CD8-positive, alpha-beta memory T cell (primary cell): ENCODE measurements at regions of chr3 and their contacts with region 1.

Region 1: DNA sequence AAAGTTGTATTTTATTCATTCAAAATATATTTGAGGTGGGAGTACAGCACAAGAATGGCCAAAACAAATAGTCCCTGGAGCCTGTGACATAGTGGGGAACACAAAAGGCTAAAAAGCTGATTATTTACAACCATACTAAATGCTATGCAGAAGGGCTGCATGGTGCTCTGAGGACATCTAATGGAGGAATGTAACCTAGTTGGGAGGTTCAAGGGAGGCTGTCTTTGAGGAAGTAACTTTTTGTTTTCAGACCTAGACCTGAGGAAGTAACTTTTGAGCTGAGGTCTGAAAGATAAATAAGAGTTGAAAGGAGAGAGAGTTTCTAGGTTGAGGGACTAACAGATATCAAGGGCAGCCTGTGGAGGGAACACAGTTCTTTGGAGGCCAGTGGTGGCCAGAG is 34.8 kb upstream of the RASA2 start:
- DNase-seq: peak in 3 of 5 donors; percentile 34 to 57 (median 56)
- H3K4me3 ChIP-seq: no peak overlapping the region
- H3K4me3 Mint-ChIP-seq: no peak overlapping the region
- H3K27ac ChIP-seq: peak overlapping the region; percentile 13
- H3K27ac Mint-ChIP-seq: no peak overlapping the region
- H3K4me1 ChIP-seq: peaks cover 21% of the 10 kb centered on the region
- H3K4me1 Mint-ChIP-seq: peaks cover 10 to 16% (median 10%) of the 10 kb centered on the region in 3 donors
- H3K27me3 ChIP-seq: no peaks in the 10 kb centered on the region
- H3K27me3 Mint-ChIP-seq: no peaks in the 10 kb centered on the region

Region 2: GRCh38 chr3:141127344-141128125 is 324.5 kb before region 1 on chr3:
- CTCF ChIA-PET with region 1: no interaction called
- POLR2A ChIA-PET with region 1: no interaction called
- DNase-seq: no peak
- H3K4me3 ChIP-seq: no peak overlapping the region
- H3K4me3 Mint-ChIP-seq: no peak overlapping the region
- H3K27ac ChIP-seq: no peak overlapping the region
- H3K27ac Mint-ChIP-seq: no peak overlapping the region
- H3K4me1 ChIP-seq: no peaks in the 10 kb centered on the region
- H3K4me1 Mint-ChIP-seq: no peaks in the 10 kb centered on the region
- H3K27me3 ChIP-seq: no peaks in the 10 kb centered on the region
- H3K27me3 Mint-ChIP-seq: peaks cover 20 to 39% of the 10 kb centered on the region in 2 donors

Region 3: DNA sequence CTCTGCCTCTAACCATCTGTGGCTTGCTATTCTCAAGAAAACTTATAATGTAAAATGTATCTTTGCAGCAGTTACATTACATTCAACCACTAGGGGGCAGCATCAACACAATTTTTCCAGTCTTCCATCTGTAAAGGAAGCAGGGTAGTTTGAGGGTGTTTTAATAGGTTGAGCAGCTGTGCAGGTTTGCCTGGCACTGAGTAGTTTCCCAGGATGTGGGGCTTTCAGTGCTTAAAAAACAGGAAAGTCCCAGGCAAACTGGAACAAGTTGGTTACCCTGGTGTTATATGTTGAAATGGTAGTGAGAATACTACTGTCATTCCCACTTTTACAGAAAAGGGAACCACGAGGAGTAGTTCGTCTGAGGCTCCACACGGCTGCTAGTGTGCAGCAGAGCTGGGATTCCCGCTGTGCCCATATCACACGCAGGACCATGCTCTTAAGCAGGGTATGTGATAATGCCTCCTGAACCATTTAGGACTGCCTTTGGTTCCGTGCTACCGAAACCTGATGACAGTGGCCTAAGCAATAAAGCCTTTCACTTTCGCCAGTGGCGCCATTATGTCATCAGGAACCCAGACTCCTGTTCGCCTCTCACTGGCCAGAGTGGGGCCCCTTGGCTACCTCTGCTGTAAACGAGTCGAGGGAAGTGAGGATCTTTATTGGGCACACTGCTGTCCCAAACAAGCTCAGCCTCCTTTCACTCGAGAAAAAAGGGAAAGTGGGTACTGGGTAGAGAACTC is 148.4 kb before region 1 on chr3:
- CTCF ChIA-PET with region 1: interaction called, 84 read pairs
- POLR2A ChIA-PET with region 1: no interaction called
- DNase-seq: peak; percentile 38 to 70 (median 66)
- H3K4me3 ChIP-seq: no peak overlapping the region
- H3K4me3 Mint-ChIP-seq: peak overlapping the region in 1 of 7 donors; percentile 10
- H3K27ac ChIP-seq: no peak overlapping the region
- H3K27ac Mint-ChIP-seq: no peak overlapping the region
- H3K4me1 ChIP-seq: peaks cover 41% of the 10 kb centered on the region
- H3K4me1 Mint-ChIP-seq: peaks cover 24 to 36% (median 34%) of the 10 kb centered on the region in 3 donors
- H3K27me3 ChIP-seq: no peaks in the 10 kb centered on the region
- H3K27me3 Mint-ChIP-seq: no peaks in the 10 kb centered on the region

Region 4: GRCh38 chr3:141311496-141312353 is 140.3 kb before region 1 on chr3:
- CTCF ChIA-PET with region 1: interaction called, 84 read pairs
- POLR2A ChIA-PET with region 1: interaction called, 11 read pairs
- DNase-seq: peak; percentile 96 to 99 (median 98)
- H3K4me3 ChIP-seq: peak overlapping the region; percentile 58
- H3K4me3 Mint-ChIP-seq: peak overlapping the region; percentile 90 to 98 (median 95)
- H3K27ac ChIP-seq: peak overlapping the region; percentile 66
- H3K27ac Mint-ChIP-seq: peak overlapping the region; percentile 82 to 99 (median 97)
- H3K4me1 ChIP-seq: peaks cover 44% of the 10 kb centered on the region
- H3K4me1 Mint-ChIP-seq: peaks cover 44 to 53% (median 48%) of the 10 kb centered on the region in 3 donors
- H3K27me3 ChIP-seq: no peaks in the 10 kb centered on the region
- H3K27me3 Mint-ChIP-seq: peaks cover 0 to 1% of the 10 kb centered on the region in 2 donors

Region 5: DNA sequence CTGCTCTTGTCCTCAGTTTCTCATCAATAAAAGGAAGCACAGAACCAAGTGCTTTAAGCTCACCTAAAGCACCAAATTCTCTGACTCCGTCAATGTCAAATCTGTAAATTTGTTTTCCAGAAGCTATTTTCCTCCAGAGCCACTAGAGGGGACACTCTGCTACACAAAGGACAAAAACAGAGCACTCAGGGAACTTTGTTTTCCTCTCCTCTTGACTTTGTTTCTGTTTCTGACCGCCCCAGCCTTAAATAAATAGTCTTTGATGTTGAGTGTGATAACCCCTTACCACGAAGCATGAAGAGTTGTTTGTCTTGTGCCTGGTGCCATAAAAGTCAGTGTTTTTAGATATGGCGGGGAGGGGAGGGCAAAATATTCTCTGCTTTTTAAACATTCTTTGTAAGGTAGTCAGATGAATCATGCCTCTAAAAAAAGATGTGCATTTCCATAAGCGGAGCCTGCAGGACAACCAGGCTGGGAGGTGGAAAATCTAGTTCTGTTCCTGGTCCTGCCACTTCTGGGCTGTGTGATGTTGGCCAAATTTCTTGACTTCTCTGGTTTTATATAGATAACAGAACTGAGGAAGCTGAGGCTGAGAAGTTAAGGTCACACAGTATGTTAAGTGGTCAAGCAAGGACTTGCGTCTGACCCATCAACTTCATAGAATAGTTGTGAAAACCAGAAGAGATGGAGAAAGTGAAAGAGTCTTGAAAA is 91.0 kb before region 1 on chr3:
- CTCF ChIA-PET with region 1: interaction called, 69 read pairs
- POLR2A ChIA-PET with region 1: no interaction called
- DNase-seq: peak in 2 of 5 donors; percentile 24 to 39
- H3K4me3 ChIP-seq: no peak overlapping the region
- H3K4me3 Mint-ChIP-seq: peak overlapping the region in 5 of 7 donors; percentile 30 to 73 (median 49)
- H3K27ac ChIP-seq: no peak overlapping the region
- H3K27ac Mint-ChIP-seq: peak overlapping the region in 1 of 8 donors; percentile 61
- H3K4me1 ChIP-seq: no peaks in the 10 kb centered on the region
- H3K4me1 Mint-ChIP-seq: peaks cover 1 to 10% (median 8%) of the 10 kb centered on the region in 3 donors
- H3K27me3 ChIP-seq: no peaks in the 10 kb centered on the region
- H3K27me3 Mint-ChIP-seq: peaks cover 0 to 3% of the 10 kb centered on the region in 2 donors

Region 6: DNA sequence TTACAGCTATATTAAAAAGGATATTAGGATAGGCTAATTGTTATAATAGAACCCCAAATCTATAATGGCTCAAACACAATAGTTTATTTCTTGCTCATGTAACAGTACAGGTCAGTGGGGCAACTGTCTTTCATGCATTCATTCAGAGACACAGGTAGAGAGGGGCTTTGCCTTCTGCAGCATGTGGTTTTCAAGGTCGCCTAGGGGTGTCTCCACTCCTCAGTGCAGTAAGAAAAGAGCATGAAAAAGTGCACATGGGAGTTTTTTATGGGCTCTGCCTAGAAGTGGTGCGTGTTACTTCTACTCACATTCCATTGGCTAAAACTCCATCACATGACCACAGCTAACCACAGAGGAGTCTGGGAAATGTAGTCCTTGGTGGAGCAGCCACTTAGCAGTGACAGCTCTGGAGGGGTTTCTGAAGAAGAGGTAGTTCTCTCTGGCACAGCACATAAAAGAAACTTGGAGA is 81.9 kb before region 1 on chr3:
- CTCF ChIA-PET with region 1: interaction called, 51 read pairs
- POLR2A ChIA-PET with region 1: no interaction called
- DNase-seq: peak; percentile 17 to 83 (median 79)
- H3K4me3 ChIP-seq: no peak overlapping the region
- H3K4me3 Mint-ChIP-seq: no peak overlapping the region
- H3K27ac ChIP-seq: peak overlapping the region; percentile 61
- H3K27ac Mint-ChIP-seq: peak overlapping the region in 3 of 8 donors; percentile 2 to 63 (median 53)
- H3K4me1 ChIP-seq: peaks cover 3% of the 10 kb centered on the region
- H3K4me1 Mint-ChIP-seq: peaks cover 7 to 11% (median 8%) of the 10 kb centered on the region in 3 donors
- H3K27me3 ChIP-seq: no peaks in the 10 kb centered on the region
- H3K27me3 Mint-ChIP-seq: peaks cover 0 to 2% of the 10 kb centered on the region in 2 donors

Region 7: DNA sequence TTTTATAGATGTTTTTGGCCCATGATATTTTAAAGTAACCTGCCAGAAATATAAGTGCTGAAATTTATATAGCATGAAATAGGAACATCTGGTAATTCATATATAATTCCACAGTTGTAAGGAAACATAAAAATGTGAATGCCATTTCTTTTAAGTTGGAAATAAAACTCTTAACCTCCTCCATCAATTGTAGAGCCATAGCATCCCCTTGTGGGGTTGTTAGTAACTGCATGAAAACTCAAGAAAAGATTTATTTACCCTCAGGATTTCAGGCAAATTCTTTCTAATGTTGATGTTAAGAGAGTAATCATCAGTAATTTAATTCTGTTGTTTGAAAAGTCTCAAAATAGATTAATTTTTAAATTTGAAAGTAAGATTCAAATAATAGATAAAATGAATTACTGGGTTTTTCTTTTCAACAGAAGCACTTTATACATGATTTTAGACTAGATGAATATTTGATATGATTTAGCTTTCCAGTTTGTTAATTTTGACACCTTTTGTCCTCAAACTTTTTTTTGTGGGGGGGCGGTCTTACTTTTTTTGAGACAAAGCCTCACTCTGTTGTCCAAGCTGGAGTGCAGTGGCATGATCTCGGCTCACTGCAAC is 109.5 kb after region 1 on chr3:
- CTCF ChIA-PET with region 1: interaction called, 31 read pairs
- POLR2A ChIA-PET with region 1: no interaction called
- DNase-seq: peak in 4 of 5 donors; percentile 25 to 70 (median 58)
- H3K4me3 ChIP-seq: no peak overlapping the region
- H3K4me3 Mint-ChIP-seq: no peak overlapping the region
- H3K27ac ChIP-seq: no peak overlapping the region
- H3K27ac Mint-ChIP-seq: peak overlapping the region; percentile 35 to 88 (median 79)
- H3K4me1 ChIP-seq: peaks cover 37% of the 10 kb centered on the region
- H3K4me1 Mint-ChIP-seq: peaks cover 21 to 36% (median 28%) of the 10 kb centered on the region in 3 donors
- H3K27me3 ChIP-seq: no peaks in the 10 kb centered on the region
- H3K27me3 Mint-ChIP-seq: no peaks in the 10 kb centered on the region